ENCODE measurements at regions of chr14 and their contacts with region 1.

Region 1: DNA sequence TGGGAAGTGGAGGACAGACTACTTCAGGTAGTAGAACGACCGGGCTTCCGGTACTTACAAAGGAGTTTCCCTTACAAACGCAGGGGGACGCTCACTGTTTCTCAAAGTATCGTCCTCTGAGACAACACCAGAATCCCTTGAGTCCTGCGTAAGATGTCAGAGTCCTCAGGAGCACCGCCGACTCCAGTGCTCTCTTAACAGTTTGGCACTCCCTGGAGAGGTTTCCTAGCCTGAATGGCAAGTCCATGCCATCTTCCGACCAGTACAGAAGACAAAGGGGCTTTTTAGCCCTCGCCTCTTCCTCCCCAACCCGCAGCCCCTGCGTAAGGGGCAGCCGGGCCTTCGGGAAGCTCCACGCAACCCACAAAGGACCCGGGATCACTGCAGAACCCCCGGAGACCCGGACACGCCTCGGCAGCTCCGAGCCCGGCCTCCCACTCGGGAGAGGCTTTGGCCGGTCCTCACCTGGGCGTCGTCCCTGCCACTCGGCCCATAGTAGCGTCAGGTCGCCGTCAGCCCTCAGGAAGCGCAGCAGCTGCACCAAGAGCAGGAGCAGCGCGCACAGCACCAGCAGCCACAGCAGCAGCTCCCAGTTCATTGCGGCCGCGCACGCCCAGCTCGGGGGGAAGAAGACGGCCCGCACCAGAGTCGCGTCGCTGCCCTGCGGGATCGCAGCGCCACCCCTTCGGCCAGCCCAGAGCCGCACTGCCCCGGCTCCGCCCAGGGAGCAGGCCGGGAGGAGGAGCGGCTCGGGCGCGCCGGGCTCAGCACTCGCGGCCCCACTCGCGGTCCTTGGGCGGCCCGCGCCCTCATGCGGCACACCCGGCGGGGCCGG is at the start of gene DHRS7:
- DNase-seq: peak; percentile 56 to 83 (median 72)
- ATAC-seq: peak; percentile 99
- H3K4me3 ChIP-seq: peak within 1 kb of the TSS; percentile 74
- H3K27ac ChIP-seq: peak within 1 kb of the TSS; percentile 75
- H3K4me1 ChIP-seq: peaks cover 0 to 9% of the 10 kb centered on the region in 2 experiments; a peak in 2 of 5 replicates
- H3K27me3 ChIP-seq: no peaks in the 10 kb centered on the region
- CTCF ChIP-seq: peak; percentile 41 to 75 (median 60); a peak in 5 of 6 replicates
- EP300 ChIP-seq: no peak
- POLR2A ChIP-seq: peak; percentile 66
- RAD21 ChIP-seq: peak; percentile 82 to 83
- polyA plus RNA-seq, gene DHRS7: 16.4 to 20.1 TPM

Region 2: GRCh38 chr14:59632381-59632780 is 532.5 kb before region 1 on chr14:
- CTCF ChIA-PET with region 1: no interaction called
- POLR2A ChIA-PET with region 1: no interaction called
- in situ Hi-C with region 1: no loop called
- intact Hi-C with region 1: loop called (anchors 5 kb)
- DNase-seq: peak; percentile 12 to 31 (median 20)
- ATAC-seq: peak; percentile 77
- H3K4me3 ChIP-seq: no peak overlapping the region
- H3K27ac ChIP-seq: no peak overlapping the region
- H3K4me1 ChIP-seq: peaks cover 0 to 6% of the 10 kb centered on the region in 2 experiments; a peak in 2 of 5 replicates
- H3K27me3 ChIP-seq: 0 out of 5 replicates have a peak, but pooled peaks cover 0 to 5% of the 10 kb centered on the region in 2 experiments
- CTCF ChIP-seq: peak; percentile 40 to 54 (median 54)
- EP300 ChIP-seq: no peak
- POLR2A ChIP-seq: no peak
- RAD21 ChIP-seq: peak; percentile 17 to 57; a peak in 3 of 4 replicates

Region 3: DNA sequence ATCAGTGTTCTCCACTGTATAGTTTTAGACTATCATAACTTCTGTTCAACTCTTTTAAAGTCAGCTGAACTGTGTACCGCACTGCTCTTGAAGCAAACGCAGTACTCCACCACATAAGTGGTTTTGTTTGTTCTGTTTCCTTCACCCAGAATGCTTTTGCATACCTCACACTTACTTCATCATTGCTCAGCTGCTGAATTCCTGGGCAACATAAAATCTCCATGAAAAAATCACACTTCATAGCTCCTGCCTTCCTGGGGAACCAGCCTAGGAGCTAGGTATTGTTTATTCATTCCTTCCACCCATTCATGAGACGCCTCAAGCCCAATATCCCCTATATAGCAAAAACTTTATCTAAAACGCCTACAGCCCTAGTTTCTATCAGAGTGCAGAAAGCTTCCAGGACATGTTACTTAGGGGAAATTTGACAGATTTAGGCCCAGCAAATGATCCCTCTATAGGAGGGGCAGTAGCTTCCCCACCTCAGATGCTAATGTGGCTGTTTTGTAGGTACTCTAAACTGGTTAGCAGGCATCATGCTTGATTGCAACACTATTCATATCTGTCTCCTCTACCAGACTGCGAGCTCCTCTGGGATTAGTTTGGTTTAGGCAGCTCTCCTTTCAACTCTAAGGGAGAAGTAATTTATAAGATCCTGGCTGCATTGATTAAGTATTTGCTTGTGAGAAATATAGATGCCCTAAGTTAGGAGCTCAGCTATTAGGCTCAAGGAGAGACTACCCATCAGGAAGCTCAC is 200.5 kb before region 1 on chr14:
- CTCF ChIA-PET with region 1: no interaction called
- POLR2A ChIA-PET with region 1: no interaction called
- in situ Hi-C with region 1: loop called (anchors 10 kb)
- intact Hi-C with region 1: loop called (anchors 5 kb)
- DNase-seq: no peak
- ATAC-seq: no peak
- H3K4me3 ChIP-seq: no peak overlapping the region
- H3K27ac ChIP-seq: no peak overlapping the region
- H3K4me1 ChIP-seq: no peaks in the 10 kb centered on the region
- H3K27me3 ChIP-seq: no peaks in the 10 kb centered on the region
- CTCF ChIP-seq: no peak
- EP300 ChIP-seq: no peak
- POLR2A ChIP-seq: no peak
- RAD21 ChIP-seq: no peak

Region 4: DNA sequence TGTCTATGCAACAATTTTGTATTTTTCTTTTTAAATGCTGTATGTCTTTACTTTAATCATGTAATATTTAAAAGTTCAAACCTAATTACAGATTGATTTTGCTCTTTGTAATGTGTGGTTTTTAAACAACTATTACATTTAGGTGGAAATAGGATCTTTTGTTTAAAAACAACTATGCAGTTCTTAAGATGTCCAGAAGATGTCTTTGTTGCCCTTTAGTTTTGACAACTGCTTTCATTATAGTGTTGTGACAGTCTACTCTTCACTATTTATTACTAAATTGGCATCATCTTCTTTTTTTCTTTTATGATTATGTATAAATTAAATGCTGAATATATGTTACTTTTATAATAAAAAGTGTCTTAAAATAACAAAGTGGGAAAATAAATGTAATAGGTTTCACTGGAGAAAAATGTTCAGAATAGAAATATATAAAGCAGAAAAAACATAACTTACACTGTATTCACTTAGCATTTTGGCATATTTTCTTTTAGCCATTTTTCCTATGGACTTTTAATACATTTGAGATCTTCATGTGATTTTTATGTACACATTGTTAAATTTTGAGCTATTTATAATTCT is 100.3 kb before region 1 on chr14:
- CTCF ChIA-PET with region 1: no interaction called
- POLR2A ChIA-PET with region 1: no interaction called
- in situ Hi-C with region 1: loop called (anchors 10 kb)
- intact Hi-C with region 1: loop called (anchors 1 kb)
- DNase-seq: peak in 2 of 4 experiments; percentile 9 to 26
- ATAC-seq: peak; percentile 63; the same call in 2 of the 3 replicates
- H3K4me3 ChIP-seq: no peak overlapping the region
- H3K27ac ChIP-seq: no peak overlapping the region
- H3K4me1 ChIP-seq: no peaks in the 10 kb centered on the region
- H3K27me3 ChIP-seq: no peaks in the 10 kb centered on the region
- CTCF ChIP-seq: peak in 2 of 3 experiments; percentile 25 to 70; a peak in 3 of 6 replicates
- EP300 ChIP-seq: no peak
- POLR2A ChIP-seq: no peak
- RAD21 ChIP-seq: peak; percentile 75 to 85

Region 5: GRCh38 chr14:60091550-60092530 is 73.1 kb before region 1 on chr14 and contains the start of gene PCNX4:
- CTCF ChIA-PET with region 1: no interaction called
- POLR2A ChIA-PET with region 1: no interaction called
- in situ Hi-C with region 1: no loop called
- intact Hi-C with region 1: loop called (anchors 2 kb)
- DNase-seq: peak; percentile 81 to 96 (median 84)
- ATAC-seq: peak; percentile 91
- H3K4me3 ChIP-seq: peak within 1 kb of the TSS; percentile 76
- H3K27ac ChIP-seq: peak within 1 kb of the TSS; percentile 99
- H3K4me1 ChIP-seq: peaks cover 0 to 22% of the 10 kb centered on the region in 2 experiments; a peak in 3 of 5 replicates
- H3K27me3 ChIP-seq: no peaks in the 10 kb centered on the region
- CTCF ChIP-seq: 0 out of 6 replicates have a peak, but pooled peaks of 1 of the 3 experiments have one; percentile 3
- EP300 ChIP-seq: no peak; the same call in 1 of the 2 replicates
- POLR2A ChIP-seq: peak; percentile 88
- RAD21 ChIP-seq: no peak
- polyA plus RNA-seq, gene PCNX4: 10.0 to 12.0 TPM

Region 6: DNA sequence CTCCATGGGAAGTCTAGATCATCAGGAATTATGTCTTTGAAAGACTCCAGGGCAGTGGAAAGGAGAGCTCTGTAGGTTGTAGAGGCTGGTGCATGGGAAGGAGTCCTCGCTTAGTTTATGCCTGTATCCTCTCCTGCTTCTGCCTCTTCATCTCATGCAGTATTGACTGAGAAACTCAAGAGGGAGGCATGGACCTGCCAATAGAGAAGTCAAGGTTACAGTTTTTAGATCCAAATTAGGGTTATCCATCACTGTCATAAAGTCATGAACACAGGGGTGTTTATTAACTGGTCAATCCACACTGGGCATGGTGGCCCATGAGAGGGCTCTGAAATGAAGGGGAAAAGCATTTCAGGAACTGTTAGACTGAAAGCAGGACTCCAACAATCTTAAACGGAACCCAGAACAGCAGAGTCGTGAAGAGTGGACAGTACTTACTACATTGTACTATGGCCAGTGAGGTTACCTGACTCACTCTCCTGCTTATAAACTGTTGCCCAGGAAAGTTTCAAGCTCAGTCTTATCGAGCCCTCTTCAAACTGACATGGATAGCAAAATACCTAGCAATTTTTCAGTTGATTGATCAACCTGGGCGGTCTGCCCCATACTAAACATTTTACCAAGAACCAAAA is 30.4 kb after region 1 on chr14:
- CTCF ChIA-PET with region 1: no interaction called
- POLR2A ChIA-PET with region 1: no interaction called
- in situ Hi-C with region 1: no loop called
- intact Hi-C with region 1: no loop called
- DNase-seq: peak in 1 of 4 experiments; percentile 16
- ATAC-seq: peak; percentile 78
- H3K4me3 ChIP-seq: no peak overlapping the region
- H3K27ac ChIP-seq: no peak overlapping the region
- H3K4me1 ChIP-seq: peaks cover 0 to 3% of the 10 kb centered on the region in 2 experiments; a peak in 2 of 5 replicates
- H3K27me3 ChIP-seq: no peaks in the 10 kb centered on the region
- CTCF ChIP-seq: peak in 2 of 3 experiments; percentile 23 to 38; a peak in 3 of 6 replicates
- EP300 ChIP-seq: no peak
- POLR2A ChIP-seq: no peak
- RAD21 ChIP-seq: peak; percentile 28 to 58

Region 7: GRCh38 chr14:60226298-60226697 is 61.4 kb after region 1 on chr14:
- CTCF ChIA-PET with region 1: no interaction called
- POLR2A ChIA-PET with region 1: no interaction called
- in situ Hi-C with region 1: no loop called
- intact Hi-C with region 1: no loop called
- DNase-seq: no peak
- ATAC-seq: peak; percentile 40; the same call in 2 of the 3 replicates
- H3K4me3 ChIP-seq: no peak overlapping the region
- H3K27ac ChIP-seq: no peak overlapping the region
- H3K4me1 ChIP-seq: peaks cover 0 to 6% of the 10 kb centered on the region in 2 experiments; a peak in 3 of 5 replicates
- H3K27me3 ChIP-seq: no peaks in the 10 kb centered on the region
- CTCF ChIP-seq: no peak
- EP300 ChIP-seq: no peak
- POLR2A ChIP-seq: no peak
- RAD21 ChIP-seq: no peak

Measured in K562 (cell line).